CD8-positive, alpha-beta memory T cell (primary cell): ENCODE measurements at regions of chr17 and their contacts with region 1.

Region 1: GRCh38 chr17:41864836-41865595 is at the start of gene KLHL11:
- DNase-seq: peak; percentile 81 to 90 (median 85)
- H3K4me3 ChIP-seq: peak within 1 kb of the TSS; percentile 94
- H3K4me3 Mint-ChIP-seq: peak within 1 kb of the TSS in 1 of 7 donors; percentile 15
- H3K27ac ChIP-seq: peak within 1 kb of the TSS; percentile 81
- H3K27ac Mint-ChIP-seq: peak within 1 kb of the TSS in 4 of 8 donors; percentile 77 to 90 (median 88)
- H3K4me1 ChIP-seq: peaks cover 28% of the 10 kb centered on the region
- H3K4me1 Mint-ChIP-seq: peaks cover 19 to 31% (median 31%) of the 10 kb centered on the region in 3 donors
- H3K27me3 ChIP-seq: no peaks in the 10 kb centered on the region
- H3K27me3 Mint-ChIP-seq: no peaks in the 10 kb centered on the region
- total RNA-seq, gene KLHL11: 24.7 to 26.9 TPM

Region 2: GRCh38 chr17:41688699-41689496 is 176.1 kb before region 1 on chr17 and contains the start of gene EIF1:
- CTCF ChIA-PET with region 1: no interaction called
- POLR2A ChIA-PET with region 1: interaction called, 16 read pairs
- DNase-seq: peak; percentile 99 to 100 (median 99)
- H3K4me3 ChIP-seq: peak within 1 kb of the TSS; percentile 94
- H3K4me3 Mint-ChIP-seq: peak within 1 kb of the TSS; percentile 96 to 100 (median 98)
- H3K27ac ChIP-seq: peak within 1 kb of the TSS; percentile 100
- H3K27ac Mint-ChIP-seq: peak within 1 kb of the TSS; percentile 99 to 100 (median 99)
- H3K4me1 ChIP-seq: peaks cover 31% of the 10 kb centered on the region
- H3K4me1 Mint-ChIP-seq: peaks cover 34 to 47% (median 39%) of the 10 kb centered on the region in 3 donors
- H3K27me3 ChIP-seq: no peaks in the 10 kb centered on the region
- H3K27me3 Mint-ChIP-seq: peaks cover 0 to 15% of the 10 kb centered on the region in 2 donors
- total RNA-seq, gene EIF1: 1,446 to 1,504 TPM

Region 3: DNA sequence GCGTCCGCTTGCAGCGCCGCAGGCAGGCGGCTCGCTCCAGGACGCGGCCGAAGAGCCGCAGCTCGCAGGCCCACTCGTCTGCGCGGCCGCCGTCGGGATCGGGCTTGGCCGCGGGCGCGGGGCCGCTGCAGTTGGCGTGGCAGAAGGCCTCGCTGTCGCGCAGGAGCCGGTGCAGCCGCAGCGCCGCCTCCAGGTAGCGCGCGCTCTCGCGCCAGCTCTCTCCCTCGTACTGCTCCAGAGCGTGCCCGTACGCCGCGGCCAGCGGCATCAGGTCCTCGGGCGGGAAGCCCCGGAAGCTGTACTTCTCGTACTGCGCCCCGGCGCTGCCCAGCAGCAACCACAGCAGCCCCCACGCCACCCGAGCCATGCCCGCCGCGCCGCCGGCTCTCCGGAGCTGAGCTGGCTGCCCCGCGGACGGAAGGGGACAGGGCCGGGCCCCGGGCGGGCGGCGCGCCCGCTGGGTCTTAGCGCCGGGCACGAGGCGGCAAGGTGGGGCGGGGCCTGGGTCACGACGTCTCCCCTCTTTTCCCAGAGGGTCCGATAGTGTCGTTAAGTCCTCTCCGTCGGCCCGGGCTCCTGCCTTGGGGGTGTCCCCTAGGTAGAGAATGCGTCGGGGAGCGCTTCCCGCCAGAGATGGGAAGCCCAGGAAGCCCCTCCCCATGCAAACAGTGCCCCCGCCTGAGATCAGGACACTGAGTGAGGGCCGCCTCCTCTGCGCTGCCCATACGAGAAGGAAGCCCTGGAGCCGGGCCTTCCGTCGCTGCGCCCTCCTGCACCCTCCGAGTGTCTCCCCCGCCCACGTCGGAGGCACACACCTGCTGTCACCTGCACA is 53.3 kb before region 1 on chr17 and contains the start of gene P3H4:
- CTCF ChIA-PET with region 1: interaction called, 10 read pairs
- POLR2A ChIA-PET with region 1: interaction called, 4 read pairs
- DNase-seq: peak; percentile 58 to 82 (median 78)
- H3K4me3 ChIP-seq: peak within 1 kb of the TSS; percentile 65
- H3K4me3 Mint-ChIP-seq: peak within 1 kb of the TSS; percentile 93 to 96 (median 94)
- H3K27ac ChIP-seq: peak within 1 kb of the TSS; percentile 24
- H3K27ac Mint-ChIP-seq: peak within 1 kb of the TSS; percentile 31 to 88 (median 84)
- H3K4me1 ChIP-seq: peaks cover 28% of the 10 kb centered on the region
- H3K4me1 Mint-ChIP-seq: peaks cover 25 to 34% (median 25%) of the 10 kb centered on the region in 3 donors
- H3K27me3 ChIP-seq: no peaks in the 10 kb centered on the region
- H3K27me3 Mint-ChIP-seq: peaks cover 0 to 8% of the 10 kb centered on the region in 2 donors
- total RNA-seq, gene P3H4: 2.6 to 3.7 TPM

Region 4: GRCh38 chr17:41918314-41919164 is 53.5 kb after region 1 on chr17 and contains the start of gene ACLY:
- CTCF ChIA-PET with region 1: no interaction called
- POLR2A ChIA-PET with region 1: interaction called, 10 read pairs
- DNase-seq: peak; percentile 91 to 96 (median 94)
- H3K4me3 ChIP-seq: peak within 1 kb of the TSS; percentile 90
- H3K4me3 Mint-ChIP-seq: peak within 1 kb of the TSS; percentile 86 to 97 (median 91)
- H3K27ac ChIP-seq: peak within 1 kb of the TSS; percentile 79
- H3K27ac Mint-ChIP-seq: peak within 1 kb of the TSS; percentile 77 to 91 (median 81)
- H3K4me1 ChIP-seq: peaks cover 15% of the 10 kb centered on the region
- H3K4me1 Mint-ChIP-seq: peaks cover 35 to 49% (median 37%) of the 10 kb centered on the region in 3 donors
- H3K27me3 ChIP-seq: no peaks in the 10 kb centered on the region
- H3K27me3 Mint-ChIP-seq: no peaks in the 10 kb centered on the region
- total RNA-seq, gene ACLY: 188 to 189 TPM